ENCODE measurements at regions of chr3 and their contacts with region 1.

Region 1: GRCh38 chr3:57169872-57170623 is 4.9 kb upstream of the IL17RD start:
- DNase-seq: peak; percentile 58
- H3K4me3 ChIP-seq: peak overlapping the region; percentile 29 to 39
- H3K27ac ChIP-seq: no peak overlapping the region
- H3K4me1 ChIP-seq: no peaks in the 10 kb centered on the region
- H3K27me3 ChIP-seq: no peaks in the 10 kb centered on the region
- CTCF ChIP-seq: peak; percentile 54 to 84 (median 73)
- POLR2A ChIP-seq: no peak

Region 2: DNA sequence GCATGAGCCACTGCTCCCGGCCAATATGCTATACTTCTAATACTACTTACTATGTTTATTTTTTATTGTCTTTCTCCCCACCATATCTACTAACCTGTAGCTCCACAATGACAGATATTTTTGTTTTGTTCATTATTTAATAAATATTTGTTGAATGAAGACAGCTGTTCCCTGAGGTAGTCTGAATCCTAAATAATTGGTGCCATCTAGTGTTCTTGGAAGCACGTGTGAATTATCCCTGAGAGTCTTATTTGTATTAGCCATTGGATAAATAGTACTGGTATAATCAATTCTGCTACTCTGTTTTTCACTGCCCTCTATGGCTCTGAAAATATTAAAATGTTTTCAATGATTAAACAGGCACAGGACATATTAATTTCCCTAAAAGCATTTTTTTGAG is 51.8 kb after region 1 on chr3:
- intact Hi-C with region 1: loop called (anchors 2 kb)
- DNase-seq: no peak
- H3K4me3 ChIP-seq: no peak overlapping the region
- H3K27ac ChIP-seq: no peak overlapping the region
- H3K4me1 ChIP-seq: no peaks in the 10 kb centered on the region
- H3K27me3 ChIP-seq: no peaks in the 10 kb centered on the region
- CTCF ChIP-seq: peak in 2 of 4 experiments; percentile 8 to 46
- POLR2A ChIP-seq: no peak

Region 3: GRCh38 chr3:57512166-57512565 is 342.1 kb after region 1 on chr3:
- intact Hi-C with region 1: no loop called
- DNase-seq: no peak
- H3K4me3 ChIP-seq: no peak overlapping the region
- H3K27ac ChIP-seq: no peak overlapping the region
- H3K4me1 ChIP-seq: no peaks in the 10 kb centered on the region
- H3K27me3 ChIP-seq: no peaks in the 10 kb centered on the region
- CTCF ChIP-seq: no peak
- POLR2A ChIP-seq: no peak